ENCODE measurements at regions of chr18 and their contacts with region 1.

Region 1: GRCh38 chr18:13051159-13051558 is 60.0 kb downstream of the CEP192 start:
- DNase-seq: no peak
- H3K4me3 ChIP-seq: no peak overlapping the region
- H3K27ac ChIP-seq: no peak overlapping the region
- H3K27me3 ChIP-seq: no peaks in the 10 kb centered on the region
- CTCF ChIP-seq: no peak

Region 2: GRCh38 chr18:13026583-13027270 is 24.4 kb before region 1 on chr18:
- CTCF ChIA-PET with region 1: no interaction called
- POLR2A ChIA-PET with region 1: interaction called, 10 read pairs
- DNase-seq: no peak
- H3K4me3 ChIP-seq: no peak overlapping the region
- H3K27ac ChIP-seq: no peak overlapping the region
- H3K27me3 ChIP-seq: no peaks in the 10 kb centered on the region
- CTCF ChIP-seq: no peak

Region 3: DNA sequence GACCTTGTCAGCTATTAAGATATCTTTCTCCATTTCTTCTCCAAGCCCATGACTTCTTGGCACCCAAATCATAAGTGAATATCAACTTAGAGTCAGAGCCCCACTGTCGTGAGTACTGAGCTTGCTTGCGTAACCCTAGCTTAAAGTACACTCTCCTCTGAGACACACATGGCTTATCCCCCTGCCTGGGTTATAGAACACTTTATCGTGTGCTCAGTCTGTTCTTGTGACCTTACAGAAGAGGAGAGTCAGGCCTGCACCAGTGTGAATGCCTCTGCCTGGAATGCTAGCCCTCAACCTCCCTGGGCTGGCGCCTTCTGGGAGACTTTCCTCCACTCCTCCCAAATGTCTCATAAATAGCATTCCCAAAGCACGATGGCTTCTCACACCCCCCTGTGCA is 19.3 kb after region 1 on chr18:
- CTCF ChIA-PET with region 1: no interaction called
- POLR2A ChIA-PET with region 1: no interaction called
- DNase-seq: no peak
- H3K4me3 ChIP-seq: no peak overlapping the region
- H3K27ac ChIP-seq: no peak overlapping the region
- H3K27me3 ChIP-seq: no peaks in the 10 kb centered on the region
- CTCF ChIP-seq: no peak

Measured in AG04450 (cell line).